ENCODE measurements at regions of chr2 and their contacts with region 1.

Region 1: GRCh38 chr2:101751875-101752619 is 54.5 kb downstream of the MAP4K4 start:
- DNase-seq: no peak

Region 2: DNA sequence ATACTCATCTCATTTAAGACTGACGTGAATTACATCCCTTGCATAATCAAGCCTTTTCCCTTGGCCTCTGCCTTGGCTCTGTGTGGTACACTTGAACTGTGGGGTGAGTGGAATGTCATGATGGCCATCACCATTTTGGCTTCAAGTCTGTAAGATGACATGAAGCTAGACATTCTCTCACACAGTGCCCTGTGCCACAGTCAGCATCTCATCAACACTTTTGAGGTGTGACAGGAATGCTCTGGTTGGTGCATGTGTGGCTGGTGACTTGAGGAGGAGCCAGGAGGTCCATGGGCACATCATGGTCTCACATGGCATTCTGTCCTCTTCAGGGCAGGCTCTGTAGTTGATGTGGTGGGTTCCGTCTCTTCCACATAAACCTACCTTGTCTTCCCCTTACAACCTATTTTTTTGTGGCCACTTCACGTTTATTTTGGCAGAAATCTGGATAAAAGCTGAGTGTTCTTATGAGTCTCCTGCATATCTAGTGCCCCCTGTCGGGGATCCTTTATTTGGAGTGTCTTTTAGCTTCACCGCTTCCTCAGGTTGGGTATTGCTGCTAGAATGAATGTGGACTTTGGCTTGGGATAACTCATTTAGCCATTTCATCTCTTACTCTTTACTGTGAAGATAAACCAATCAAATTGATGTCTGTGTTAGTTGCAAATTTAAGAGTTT is 26.4 kb before region 1 on chr2:
- intact Hi-C with region 1: no loop called
- DNase-seq: no peak

Region 3: GRCh38 chr2:101788995-101789970 is 37.2 kb after region 1 on chr2:
- intact Hi-C with region 1: loop called in 1 of 2 experiments (anchors 2 kb)
- DNase-seq: no peak

Region 4: GRCh38 chr2:102915128-102915527 is 1163.1 kb after region 1 on chr2:
- intact Hi-C with region 1: no loop called
- DNase-seq: no peak